CD8-positive, alpha-beta memory T cell (primary cell): ENCODE measurements at regions of chr10 and their contacts with region 1.

Region 1: DNA sequence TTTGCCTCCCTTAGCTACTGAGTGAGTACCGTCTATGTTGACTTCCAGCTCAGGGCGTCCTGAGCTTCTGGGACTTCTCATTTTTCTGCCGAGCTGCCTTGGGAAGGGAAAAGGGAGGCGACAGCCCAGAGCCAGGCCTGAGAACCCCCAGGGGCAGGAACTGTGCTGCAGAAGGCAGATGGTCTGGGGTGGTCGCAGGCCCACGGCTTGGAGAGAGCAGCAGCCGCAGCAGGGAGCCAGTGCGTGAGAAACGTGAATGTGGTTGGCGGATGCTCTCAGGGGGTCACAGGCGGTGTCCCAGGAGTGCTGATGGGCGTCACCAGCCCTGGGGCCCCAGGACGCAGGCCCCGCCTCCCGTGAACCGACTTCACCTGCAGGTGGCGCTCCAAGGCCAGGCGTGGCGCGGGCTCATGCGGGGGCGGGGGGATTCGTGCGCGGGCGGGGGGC is 9.2 kb upstream of the PWWP2B start:
- DNase-seq: peak; percentile 77 to 87 (median 77)
- H3K4me3 ChIP-seq: no peak overlapping the region
- H3K4me3 Mint-ChIP-seq: peak overlapping the region in 4 of 7 donors; percentile 45 to 57 (median 50)
- H3K27ac ChIP-seq: no peak overlapping the region
- H3K27ac Mint-ChIP-seq: peak overlapping the region in 6 of 8 donors; percentile 65 to 93 (median 84)
- H3K4me1 ChIP-seq: peaks cover 7% of the 10 kb centered on the region
- H3K4me1 Mint-ChIP-seq: peaks cover 8 to 11% (median 10%) of the 10 kb centered on the region in 3 donors
- H3K27me3 ChIP-seq: no peaks in the 10 kb centered on the region
- H3K27me3 Mint-ChIP-seq: no peaks in the 10 kb centered on the region

Region 2: GRCh38 chr10:132452631-132453469 is 65.1 kb after region 1 on chr10:
- CTCF ChIA-PET with region 1: interaction called, 18 read pairs
- POLR2A ChIA-PET with region 1: no interaction called
- DNase-seq: peak; percentile 88 to 95 (median 91)
- H3K4me3 ChIP-seq: peak overlapping the region; percentile 46
- H3K4me3 Mint-ChIP-seq: peak overlapping the region; percentile 45 to 89 (median 53)
- H3K27ac ChIP-seq: peak overlapping the region; percentile 51
- H3K27ac Mint-ChIP-seq: peak overlapping the region; percentile 84 to 97 (median 94)
- H3K4me1 ChIP-seq: peaks cover 27% of the 10 kb centered on the region
- H3K4me1 Mint-ChIP-seq: peaks cover 9 to 35% (median 11%) of the 10 kb centered on the region in 3 donors
- H3K27me3 ChIP-seq: no peaks in the 10 kb centered on the region
- H3K27me3 Mint-ChIP-seq: no peaks in the 10 kb centered on the region